ENCODE measurements at regions of chr10 and their contacts with region 1.

Region 1: GRCh38 chr10:29257106-29257783 is 31.6 kb upstream of the LYZL1 start:
- DNase-seq: no peak
- H3K4me3 Mint-ChIP-seq: no peak overlapping the region
- H3K27ac Mint-ChIP-seq: no peak overlapping the region
- H3K4me1 Mint-ChIP-seq: no peaks in the 10 kb centered on the region
- H3K27me3 Mint-ChIP-seq: peaks cover 67% of the 10 kb centered on the region
- CTCF ChIP-seq: no peak

Region 2: DNA sequence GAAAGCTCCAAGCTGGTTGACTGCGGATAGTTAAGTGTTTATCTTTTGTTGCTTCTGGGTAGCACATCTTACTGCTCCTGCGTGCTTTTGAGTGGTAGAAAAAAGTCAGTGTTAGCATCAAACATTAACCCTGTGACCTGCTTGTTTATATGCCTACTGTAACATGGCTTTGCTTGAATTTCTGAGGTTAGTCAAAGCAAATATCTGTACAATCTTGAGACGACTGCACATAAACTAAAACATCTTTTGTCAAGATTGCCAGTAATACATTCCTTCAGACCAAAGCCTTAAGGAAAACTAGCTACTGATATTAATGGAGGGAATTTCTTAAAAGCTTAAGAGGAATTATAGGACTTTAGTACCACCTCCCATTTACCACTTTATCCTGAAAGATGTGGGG is 416.3 kb before region 1 on chr10:
- CTCF ChIA-PET with region 1: interaction called, 11 read pairs
- intact Hi-C with region 1: no loop called
- DNase-seq: no peak
- H3K4me3 Mint-ChIP-seq: no peak overlapping the region
- H3K27ac Mint-ChIP-seq: no peak overlapping the region
- H3K4me1 Mint-ChIP-seq: peaks cover 12% of the 10 kb centered on the region
- H3K27me3 Mint-ChIP-seq: no peaks in the 10 kb centered on the region
- CTCF ChIP-seq: no peak

Region 3: GRCh38 chr10:29191674-29192073 is 65.6 kb before region 1 on chr10:
- CTCF ChIA-PET with region 1: no interaction called
- intact Hi-C with region 1: no loop called
- DNase-seq: no peak
- H3K4me3 Mint-ChIP-seq: no peak overlapping the region
- H3K27ac Mint-ChIP-seq: no peak overlapping the region
- H3K4me1 Mint-ChIP-seq: peaks cover 2% of the 10 kb centered on the region
- H3K27me3 Mint-ChIP-seq: peaks cover 34% of the 10 kb centered on the region
- CTCF ChIP-seq: no peak

Region 4: DNA sequence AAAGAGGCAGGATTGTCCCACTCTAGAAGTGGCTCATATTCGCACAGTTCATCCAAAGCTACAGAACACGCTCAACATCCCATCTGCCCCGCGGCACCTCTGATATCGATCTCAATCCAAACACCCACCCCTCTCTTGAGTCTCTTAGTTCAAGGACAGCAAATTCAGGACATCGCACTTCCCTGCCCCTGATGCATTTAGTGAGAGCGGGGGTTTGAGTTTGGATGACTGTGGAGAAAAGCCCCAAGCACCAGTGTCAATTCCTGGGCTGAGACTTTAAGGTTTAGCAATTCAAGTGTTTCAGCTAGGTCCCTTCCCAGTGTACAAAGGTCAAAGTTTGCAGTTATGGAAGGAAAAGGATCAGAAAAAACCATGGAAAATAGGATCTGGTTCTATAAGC is 197.8 kb after region 1 on chr10:
- CTCF ChIA-PET with region 1: no interaction called
- intact Hi-C with region 1: no loop called
- DNase-seq: no peak
- H3K4me3 Mint-ChIP-seq: no peak overlapping the region
- H3K27ac Mint-ChIP-seq: no peak overlapping the region
- H3K4me1 Mint-ChIP-seq: no peaks in the 10 kb centered on the region
- H3K27me3 Mint-ChIP-seq: no peaks in the 10 kb centered on the region
- CTCF ChIP-seq: no peak